Activated CD4-positive, alpha-beta T cell treated with anti-CD3 and anti-CD28 coated beads, Interleukin-2, amount 10 ng/mL, durations not matched to agents 24 days and 14 days (primary cell): ENCODE measurements at regions of chr1 and their contacts with region 1.

Region 1: DNA sequence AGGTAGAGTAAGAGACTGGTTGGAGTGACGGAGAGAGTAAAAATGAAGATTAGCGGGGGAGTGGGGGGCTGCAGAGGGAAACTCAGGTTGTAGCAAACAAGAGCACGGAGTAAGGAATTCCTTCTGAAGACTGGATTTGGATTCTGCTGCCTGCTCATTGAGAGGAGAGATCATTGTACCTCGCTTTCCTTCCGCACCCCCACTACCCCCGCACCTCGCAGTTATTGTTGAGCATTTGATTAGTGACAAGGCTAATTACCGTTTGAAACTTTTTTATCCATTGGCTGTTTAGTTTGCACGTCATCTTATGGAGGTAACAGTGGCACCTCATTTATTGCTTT is 463 bp downstream of the PRPF3 start:
- DNase-seq: peak; percentile 65
- H3K4me3 Mint-ChIP-seq: peak overlapping the region; percentile 99
- H3K27ac Mint-ChIP-seq: peak overlapping the region; percentile 99
- H3K4me1 Mint-ChIP-seq: peaks cover 12% of the 10 kb centered on the region
- H3K27me3 Mint-ChIP-seq: peaks cover 2% of the 10 kb centered on the region

Region 2: GRCh38 chr1:150221552-150221951 is 100.2 kb before region 1 on chr1:
- intact Hi-C with region 1: no loop called
- DNase-seq: peak; percentile 67
- H3K4me3 Mint-ChIP-seq: no peak overlapping the region
- H3K27ac Mint-ChIP-seq: no peak overlapping the region
- H3K4me1 Mint-ChIP-seq: peaks cover 12% of the 10 kb centered on the region
- H3K27me3 Mint-ChIP-seq: no peaks in the 10 kb centered on the region

Region 3: GRCh38 chr1:150281837-150282653 is 39.8 kb before region 1 on chr1 and contains the start of gene CIART:
- intact Hi-C with region 1: no loop called
- DNase-seq: peak; percentile 92
- H3K4me3 Mint-ChIP-seq: peak within 1 kb of the TSS; percentile 85
- H3K27ac Mint-ChIP-seq: peak within 1 kb of the TSS; percentile 87
- H3K4me1 Mint-ChIP-seq: peaks cover 23% of the 10 kb centered on the region
- H3K27me3 Mint-ChIP-seq: peaks cover 6% of the 10 kb centered on the region
- total RNA-seq, gene CIART: 6.0 and 7.5 TPM in 2 replicates

Region 4: GRCh38 chr1:150309770-150310508 is 11.9 kb before region 1 on chr1:
- intact Hi-C with region 1: no loop called
- DNase-seq: no peak
- H3K4me3 Mint-ChIP-seq: no peak overlapping the region
- H3K27ac Mint-ChIP-seq: no peak overlapping the region
- H3K4me1 Mint-ChIP-seq: no peaks in the 10 kb centered on the region
- H3K27me3 Mint-ChIP-seq: no peaks in the 10 kb centered on the region

Region 5: DNA sequence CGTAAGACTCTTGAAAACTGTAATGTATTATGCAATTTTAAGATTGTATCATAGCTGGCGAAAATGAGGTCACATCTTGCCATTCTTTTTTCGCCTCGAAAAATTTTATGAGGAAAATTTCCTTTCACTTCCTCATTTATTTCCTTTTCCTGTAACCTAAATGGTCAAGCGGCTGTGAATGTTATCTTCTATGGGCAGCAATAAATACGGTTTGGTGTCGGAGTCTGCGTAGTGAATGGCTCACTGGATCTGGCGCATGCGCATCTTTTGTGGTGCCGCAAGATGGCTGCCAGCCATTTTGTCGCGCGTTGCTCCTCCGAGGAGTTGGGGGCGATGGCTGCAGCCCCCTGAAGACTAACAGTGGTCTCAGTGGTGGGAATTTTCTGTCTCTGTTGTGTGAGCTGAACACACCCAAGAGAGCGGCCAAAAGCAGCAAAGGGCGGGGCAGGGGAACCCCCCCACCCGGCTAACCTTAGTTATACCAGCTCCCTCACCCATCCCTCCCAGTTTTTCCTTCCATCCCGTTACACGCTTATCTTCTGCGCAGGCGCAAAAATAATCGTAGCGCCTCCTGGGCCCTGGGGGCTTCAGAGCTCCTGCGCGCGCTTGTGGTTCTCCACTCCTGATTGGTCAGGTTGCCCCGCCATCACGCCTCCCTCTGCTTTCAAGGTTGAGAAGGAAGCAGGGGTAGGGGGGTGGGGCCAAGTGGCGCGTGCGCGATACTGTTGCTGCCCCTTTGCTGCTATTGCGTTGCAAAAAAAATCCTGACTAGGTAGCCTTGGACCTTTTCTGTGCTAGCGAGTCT is 41.8 kb after region 1 on chr1 and contains the start of gene RPRD2:
- intact Hi-C with region 1: loop called (anchors 1 kb)
- DNase-seq: peak; percentile 100
- H3K4me3 Mint-ChIP-seq: peak within 1 kb of the TSS; percentile 89
- H3K27ac Mint-ChIP-seq: peak within 1 kb of the TSS; percentile 93
- H3K4me1 Mint-ChIP-seq: peaks cover 25% of the 10 kb centered on the region
- H3K27me3 Mint-ChIP-seq: peaks cover 2% of the 10 kb centered on the region
- total RNA-seq, gene RPRD2: 23.7 and 24.6 TPM in 2 replicates

Region 6: GRCh38 chr1:150515328-150516048 is 193.7 kb after region 1 on chr1 and contains the start of gene FALEC:
- intact Hi-C with region 1: loop called (anchors 5 kb)
- DNase-seq: peak; percentile 98
- H3K4me3 Mint-ChIP-seq: peak within 1 kb of the TSS; percentile 95
- H3K27ac Mint-ChIP-seq: peak within 1 kb of the TSS; percentile 83
- H3K4me1 Mint-ChIP-seq: peaks cover 11% of the 10 kb centered on the region
- H3K27me3 Mint-ChIP-seq: peaks cover 2% of the 10 kb centered on the region
- total RNA-seq, gene FALEC: not detected in 2 replicates